Activated CD4-positive, alpha-beta memory T cell treated with anti-CD3 and anti-CD28 coated beads, Interleukin-2, amount 10 ng/mL, durations not matched to agents 7 days and 5 days (primary cell): ENCODE measurements at regions of chr3 and their contacts with region 1.

Region 1: DNA sequence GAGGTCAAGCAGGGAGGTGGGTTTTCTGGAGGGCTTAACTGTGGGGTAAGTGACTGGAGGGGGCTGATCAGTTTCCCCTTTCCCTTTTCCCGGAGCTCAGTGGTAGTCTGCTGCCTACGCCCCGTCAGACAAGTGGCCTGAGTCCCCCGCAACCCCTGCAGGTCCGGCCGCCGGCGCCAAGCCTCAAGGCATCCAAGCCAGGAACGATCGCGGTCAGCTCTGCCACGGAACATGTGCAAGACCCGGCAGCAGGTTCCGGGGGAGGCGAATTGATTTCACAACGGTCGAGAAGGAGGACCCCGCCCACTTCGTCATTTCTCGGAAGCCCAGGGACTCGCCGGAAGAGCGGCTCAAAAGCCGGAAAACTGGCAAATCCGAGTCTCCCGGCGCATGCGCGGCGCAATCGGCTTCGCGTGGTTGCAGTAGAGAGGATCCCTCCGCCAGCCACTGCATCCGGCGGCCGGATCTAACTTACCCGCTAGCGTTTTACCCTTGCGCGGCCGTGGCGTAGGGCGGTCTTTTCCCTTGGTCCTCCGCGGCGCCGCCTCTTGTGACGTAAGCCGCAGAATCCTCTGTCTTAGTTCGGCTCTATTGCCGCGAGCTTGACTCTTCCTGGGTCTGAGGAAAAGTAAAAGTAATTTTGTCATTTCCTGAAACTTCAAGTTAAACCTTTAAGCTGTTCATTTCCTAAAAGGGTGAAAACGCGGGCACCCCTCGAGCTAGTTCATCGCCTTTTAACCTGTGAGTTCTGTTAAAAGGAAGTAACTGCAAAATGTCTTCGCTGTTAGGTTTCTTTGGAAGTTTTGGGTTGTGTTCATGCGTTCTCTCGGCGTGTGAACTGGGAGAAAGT is 14.9 kb upstream of the CCNL1 start:
- DNase-seq: peak; percentile 99
- H3K4me3 Mint-ChIP-seq: peak overlapping the region; percentile 89
- H3K27ac Mint-ChIP-seq: peak overlapping the region; percentile 97
- H3K4me1 Mint-ChIP-seq: peaks cover 21% of the 10 kb centered on the region
- H3K27me3 Mint-ChIP-seq: peaks cover 4% of the 10 kb centered on the region

Region 2: DNA sequence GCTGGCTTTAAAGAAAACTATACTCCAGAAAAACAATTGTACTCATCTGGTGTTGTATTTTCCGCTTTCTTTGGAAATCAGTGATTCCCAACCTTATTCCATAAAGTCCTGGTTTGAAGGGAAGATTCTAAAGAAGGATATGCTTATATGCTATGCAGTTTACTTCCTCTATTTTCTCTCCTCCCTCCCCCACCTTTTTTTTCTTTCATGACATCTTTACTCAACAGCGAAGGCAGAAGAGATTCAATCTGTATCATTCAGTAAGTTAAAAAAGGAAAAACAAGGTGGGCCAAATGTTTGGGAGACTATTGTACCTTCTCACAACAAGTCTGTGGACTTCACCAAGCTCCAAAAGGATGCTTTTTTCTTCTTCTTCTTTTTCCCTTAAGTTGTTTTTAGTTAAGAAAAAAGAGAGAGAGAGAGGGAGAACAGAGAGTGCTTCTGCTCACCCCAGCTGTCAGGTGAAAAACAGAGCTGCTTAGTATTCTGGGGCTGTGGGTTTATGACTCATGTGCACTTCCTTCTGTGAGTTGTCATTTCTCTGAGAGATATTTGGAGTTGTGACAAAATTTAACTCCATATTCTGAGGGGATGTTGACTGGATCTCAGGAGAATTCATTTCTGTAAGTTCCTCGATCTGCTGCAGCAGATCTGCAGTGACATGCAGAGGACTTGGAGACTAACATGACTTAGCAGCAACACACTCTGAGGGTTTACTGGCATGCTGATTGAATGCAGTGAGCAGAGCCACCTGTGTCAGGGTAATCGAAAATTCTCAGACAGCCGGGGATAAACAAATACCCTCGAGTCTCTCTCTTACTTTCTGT is 690.7 kb before region 1 on chr3:
- CTCF ChIA-PET with region 1: no interaction called
- POLR2A ChIA-PET with region 1: interaction called, 18 read pairs
- DNase-seq: peak; percentile 62
- H3K4me3 Mint-ChIP-seq: peak overlapping the region; percentile 72
- H3K27ac Mint-ChIP-seq: peak overlapping the region; percentile 88
- H3K4me1 Mint-ChIP-seq: peaks cover 42% of the 10 kb centered on the region
- H3K27me3 Mint-ChIP-seq: no peaks in the 10 kb centered on the region

Region 3: GRCh38 chr3:156816800-156817645 is 357.9 kb before region 1 on chr3:
- CTCF ChIA-PET with region 1: no interaction called
- POLR2A ChIA-PET with region 1: interaction called, 17 read pairs
- DNase-seq: peak; percentile 93
- H3K4me3 Mint-ChIP-seq: peak overlapping the region; percentile 86
- H3K27ac Mint-ChIP-seq: peak overlapping the region; percentile 96
- H3K4me1 Mint-ChIP-seq: peaks cover 71% of the 10 kb centered on the region
- H3K27me3 Mint-ChIP-seq: no peaks in the 10 kb centered on the region

Region 4: DNA sequence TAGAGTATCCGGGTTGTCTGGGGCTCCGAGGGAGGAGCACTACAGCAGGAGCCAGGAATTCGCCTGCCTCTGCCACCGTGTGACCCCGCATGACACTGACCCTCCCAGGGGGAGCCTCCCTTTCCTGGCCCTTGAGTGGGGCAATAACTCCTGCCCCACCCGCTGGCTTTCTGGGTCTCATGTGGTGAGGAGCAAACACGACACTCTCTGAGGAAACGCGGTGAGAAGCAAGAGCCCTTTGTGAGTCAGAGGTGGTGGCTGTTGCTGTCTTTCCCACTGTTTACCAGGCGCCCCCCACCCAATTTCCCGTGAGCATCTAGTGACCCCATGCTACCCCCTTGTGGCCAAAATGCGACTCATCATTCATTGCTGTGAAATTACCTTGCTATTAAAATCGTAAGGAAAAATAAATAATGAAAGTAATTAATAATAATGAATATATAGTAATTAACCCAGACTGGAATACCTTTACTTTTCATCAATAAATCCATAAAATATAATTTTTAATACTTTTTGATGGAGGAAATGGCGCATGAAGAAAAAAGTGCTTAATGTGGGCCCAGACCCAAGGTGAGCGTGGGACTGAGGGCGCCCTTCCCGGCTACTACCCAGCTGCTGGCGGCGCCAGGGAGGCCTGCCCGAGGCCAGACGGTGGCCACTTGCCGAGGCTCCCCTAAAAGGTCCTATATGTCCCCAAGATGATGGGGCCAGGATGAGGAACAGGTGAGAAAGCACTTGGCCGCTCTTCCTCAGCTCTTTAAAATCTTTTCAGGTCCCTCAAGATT is 44.2 kb before region 1 on chr3:
- CTCF ChIA-PET with region 1: interaction called, 4 read pairs
- POLR2A ChIA-PET with region 1: interaction called, 74 read pairs
- DNase-seq: peak; percentile 82
- H3K4me3 Mint-ChIP-seq: peak overlapping the region; percentile 60
- H3K27ac Mint-ChIP-seq: peak overlapping the region; percentile 99
- H3K4me1 Mint-ChIP-seq: peaks cover 88% of the 10 kb centered on the region
- H3K27me3 Mint-ChIP-seq: no peaks in the 10 kb centered on the region

Region 5: GRCh38 chr3:157148196-157148889 is 26.5 kb before region 1 on chr3:
- CTCF ChIA-PET with region 1: interaction called, 3 read pairs
- POLR2A ChIA-PET with region 1: interaction called, 40 read pairs
- DNase-seq: no peak
- H3K4me3 Mint-ChIP-seq: no peak overlapping the region
- H3K27ac Mint-ChIP-seq: peak overlapping the region; percentile 54
- H3K4me1 Mint-ChIP-seq: peaks cover 62% of the 10 kb centered on the region
- H3K27me3 Mint-ChIP-seq: no peaks in the 10 kb centered on the region

Region 6: GRCh38 chr3:157201648-157202278 is 26.9 kb after region 1 on chr3:
- CTCF ChIA-PET with region 1: interaction called, 23 read pairs
- POLR2A ChIA-PET with region 1: interaction called, 21 read pairs
- DNase-seq: no peak
- H3K4me3 Mint-ChIP-seq: no peak overlapping the region
- H3K27ac Mint-ChIP-seq: no peak overlapping the region
- H3K4me1 Mint-ChIP-seq: no peaks in the 10 kb centered on the region
- H3K27me3 Mint-ChIP-seq: peaks cover 7% of the 10 kb centered on the region